GM12878 (cell line): ENCODE measurements at regions of chr10 and their contacts with region 1.

Region 1: DNA sequence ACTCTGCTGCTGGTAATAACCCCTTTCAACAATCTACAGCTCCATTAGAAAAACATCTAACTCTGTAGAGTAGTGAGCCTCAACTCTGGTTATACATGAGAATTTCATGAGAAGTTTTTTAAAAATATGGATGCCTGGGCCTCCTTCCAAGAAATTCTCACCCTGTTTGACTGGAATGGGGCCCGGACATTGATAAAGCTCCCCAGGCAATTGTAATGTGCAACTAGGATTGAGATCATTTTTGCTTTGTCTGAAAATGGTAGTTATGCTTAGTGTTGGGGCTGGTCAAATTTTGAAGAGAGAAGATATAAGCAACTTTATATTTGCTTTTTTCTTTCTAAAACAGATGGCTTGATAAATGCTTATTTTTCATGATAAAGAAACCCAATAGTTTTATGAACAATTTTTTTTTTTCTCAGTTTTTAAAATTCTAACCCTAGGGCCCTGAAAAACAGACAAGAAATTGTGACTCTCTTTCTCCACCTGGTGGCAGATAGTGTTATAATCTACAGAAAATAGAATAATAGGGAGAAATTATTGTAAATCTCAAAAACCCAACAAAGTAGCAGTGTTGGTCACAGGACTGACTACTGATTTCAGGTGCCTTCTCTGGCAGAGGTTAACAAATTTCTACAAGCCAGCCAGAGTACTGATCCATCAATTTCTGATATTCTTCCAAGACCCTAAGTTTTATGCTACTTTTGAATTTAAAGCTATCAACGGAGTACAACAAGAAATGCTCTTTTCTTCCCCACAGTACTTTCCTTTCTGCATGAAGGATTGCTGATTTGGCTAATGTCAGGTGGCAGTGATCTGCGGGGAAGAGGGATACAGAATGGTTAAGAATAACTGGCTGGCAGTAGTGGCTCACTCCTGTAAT is 174.8 kb downstream of the DKK1 start:
- DNase-seq: no peak
- ATAC-seq: 0 out of 3 replicates have a peak, but pooled peaks have one; percentile 27
- H3K4me3 ChIP-seq: no peak overlapping the region
- H3K27ac ChIP-seq: no peak overlapping the region
- H3K4me1 ChIP-seq: no peaks in the 10 kb centered on the region
- H3K27me3 ChIP-seq: no peaks in the 10 kb centered on the region
- CTCF ChIP-seq: peak; percentile 17 to 41 (median 36); a peak in 5 of 6 replicates
- EP300 ChIP-seq: no peak
- POLR2A ChIP-seq: no peak
- RAD21 ChIP-seq: peak; percentile 46

Region 2: GRCh38 chr10:52313933-52314816 is 174.7 kb before region 1 on chr10 and contains the start of gene DKK1:
- CTCF ChIA-PET with region 1: interaction called, 61 read pairs
- POLR2A ChIA-PET with region 1: no interaction called
- RAD21 ChIA-PET with region 1: interaction called, 4 read pairs
- SMC1A ChIA-PET with region 1: interaction called, 3 read pairs
- in situ Hi-C with region 1: loop called (anchors 10 kb)
- intact Hi-C with region 1: no loop called
- DNase-seq: no peak
- ATAC-seq: peak; percentile 77
- H3K4me3 ChIP-seq: no peak within 1 kb of the TSS
- H3K27ac ChIP-seq: no peak within 1 kb of the TSS
- H3K4me1 ChIP-seq: no peaks in the 10 kb centered on the region
- H3K27me3 ChIP-seq: peaks cover 7 to 8% of the 10 kb centered on the region in 2 experiments
- CTCF ChIP-seq: peak; percentile 42 to 60 (median 56)
- EP300 ChIP-seq: no peak
- POLR2A ChIP-seq: no peak
- RAD21 ChIP-seq: no peak
- polyA plus RNA-seq, gene DKK1: not detected

Region 3: DNA sequence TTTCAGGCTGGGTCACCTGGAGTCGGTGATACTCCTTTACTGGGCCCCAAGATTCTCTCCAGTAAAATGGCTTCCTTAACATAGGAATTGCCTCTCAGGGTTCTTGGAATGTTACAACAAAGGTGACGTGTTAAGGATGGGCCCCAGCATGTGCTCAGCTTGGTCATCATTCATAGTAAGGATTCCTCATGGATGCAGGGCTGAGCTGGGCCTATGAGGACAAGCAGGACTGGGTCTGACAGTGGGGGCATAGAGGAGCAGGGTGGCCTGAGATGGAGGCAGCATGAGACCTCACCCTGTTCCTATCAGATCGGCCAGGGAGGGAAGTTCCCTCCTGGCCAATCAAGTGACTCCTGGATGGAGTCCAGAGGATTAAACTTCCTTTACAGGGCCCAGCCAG is 296.6 kb after region 1 on chr10:
- CTCF ChIA-PET with region 1: no interaction called
- POLR2A ChIA-PET with region 1: no interaction called
- RAD21 ChIA-PET with region 1: no interaction called
- SMC1A ChIA-PET with region 1: no interaction called
- in situ Hi-C with region 1: no loop called
- intact Hi-C with region 1: no loop called
- DNase-seq: no peak
- ATAC-seq: no peak
- H3K4me3 ChIP-seq: no peak overlapping the region
- H3K27ac ChIP-seq: no peak overlapping the region
- H3K4me1 ChIP-seq: no peaks in the 10 kb centered on the region
- H3K27me3 ChIP-seq: no peaks in the 10 kb centered on the region
- CTCF ChIP-seq: no peak
- EP300 ChIP-seq: no peak
- POLR2A ChIP-seq: no peak
- RAD21 ChIP-seq: no peak